ENCODE measurements at regions of chr9 and their contacts with region 1.

Region 1: DNA sequence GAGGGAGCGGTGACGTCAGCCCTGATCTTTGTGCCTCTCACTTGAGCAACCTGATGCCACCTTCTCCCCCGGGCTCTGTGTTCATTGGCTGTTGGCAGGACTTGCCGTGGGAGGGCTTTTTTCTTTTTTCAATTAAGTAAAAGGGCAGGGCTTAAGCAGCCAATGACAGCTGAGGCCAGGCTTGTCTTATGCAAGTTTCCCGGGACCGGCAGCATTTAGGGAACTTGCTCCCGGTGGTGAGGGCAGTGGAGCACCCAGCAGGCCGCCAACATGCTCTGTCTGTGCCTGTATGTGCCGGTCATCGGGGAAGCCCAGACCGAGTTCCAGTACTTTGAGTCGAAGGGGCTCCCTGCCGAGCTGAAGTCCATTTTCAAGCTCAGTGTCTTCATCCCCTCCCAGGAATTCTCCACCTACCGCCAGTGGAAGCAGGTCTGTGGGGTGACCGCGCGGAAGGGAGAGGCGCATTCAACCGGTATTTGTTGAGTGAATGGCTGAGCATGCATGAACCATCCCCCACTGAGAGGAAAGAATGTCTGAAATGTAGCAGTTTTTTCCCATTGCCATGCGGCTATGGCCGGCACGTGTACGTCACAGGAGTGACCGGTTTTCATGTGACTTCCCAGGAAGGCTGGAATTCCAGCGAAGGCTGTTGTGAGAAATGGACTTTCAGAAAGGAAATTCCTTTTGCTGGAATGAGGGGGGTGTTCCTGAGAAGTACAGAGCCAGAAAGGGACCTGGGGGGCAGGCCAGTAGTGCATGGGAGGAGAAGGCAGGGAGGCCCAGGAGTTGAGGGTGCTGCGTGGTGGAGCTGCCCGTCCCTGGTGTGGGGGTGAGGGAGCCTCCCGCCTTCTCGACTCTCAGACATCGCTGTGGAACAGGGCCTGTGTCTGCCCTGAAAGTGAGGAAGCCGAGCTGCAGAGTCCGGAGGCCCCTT is 29.0 kb downstream of the PTGES2 start:
- DNase-seq: peak; percentile 93

Region 2: DNA sequence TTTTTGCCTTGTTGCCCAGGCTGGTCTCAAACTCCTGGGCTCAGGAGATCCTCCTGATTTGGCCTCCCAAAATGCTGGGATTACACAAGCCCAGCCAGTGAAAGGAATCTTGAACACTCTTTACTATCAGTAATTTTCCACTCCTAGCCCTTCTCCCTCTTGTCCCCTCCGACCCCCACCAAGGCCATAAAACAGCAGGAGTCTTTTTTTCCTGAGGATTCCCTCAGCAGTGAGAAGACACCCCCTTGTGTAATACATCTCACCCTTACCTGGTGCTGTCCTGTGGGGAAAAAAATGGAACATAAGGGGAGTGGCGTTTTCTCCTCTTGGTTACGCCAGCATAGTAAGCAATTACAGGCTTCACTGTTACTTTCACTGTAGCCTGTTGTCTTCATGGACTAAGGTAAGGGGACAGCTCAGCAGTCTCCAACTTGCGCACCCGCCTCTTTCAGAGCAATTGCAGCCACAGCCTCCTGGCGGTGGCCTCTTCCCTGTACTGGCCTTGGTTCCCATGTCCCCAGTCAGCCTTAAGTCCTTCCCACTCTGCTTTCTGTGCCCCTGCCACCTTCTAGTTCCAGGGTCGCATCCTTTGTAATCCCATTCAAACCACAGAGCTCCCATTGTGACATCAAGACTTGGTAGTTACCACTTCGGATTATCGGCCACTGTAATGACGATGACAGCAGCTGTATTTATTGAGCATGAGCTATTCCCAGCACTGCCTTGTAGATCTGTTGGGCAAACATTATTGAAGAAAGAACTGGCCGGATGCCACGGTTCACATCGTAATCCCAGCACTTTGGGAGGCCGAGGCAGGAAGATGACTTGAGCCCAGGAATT is 41.5 kb before region 1 on chr9:
- intact Hi-C with region 1: no loop called
- DNase-seq: no peak

Region 3: GRCh38 chr9:128067876-128068613 is 30.5 kb before region 1 on chr9 and contains the start of gene SLC25A25:
- intact Hi-C with region 1: loop called (anchors 2 kb)
- DNase-seq: peak; percentile 100
- total RNA-seq, gene SLC25A25: 5.6 TPM

Region 4: GRCh38 chr9:128127990-128128835 is 29.6 kb after region 1 on chr9:
- intact Hi-C with region 1: loop called (anchors 2 kb)
- DNase-seq: peak; percentile 91

Measured in cardiac septum (tissue), 1 donor.